Mammary epithelial cell (primary cell): ENCODE measurements at regions of chr1 and their contacts with region 1.

Region 1: GRCh38 chr1:223423641-223424233 is 30.5 kb downstream of the CCDC185 start:
- DNase-seq: peak; percentile 21
- H3K4me3 ChIP-seq: no peak overlapping the region
- H3K27ac ChIP-seq: no peak overlapping the region
- H3K4me1 ChIP-seq: peaks cover 21% of the 10 kb centered on the region
- H3K27me3 ChIP-seq: no peaks in the 10 kb centered on the region
- CTCF ChIP-seq: no peak

Region 2: DNA sequence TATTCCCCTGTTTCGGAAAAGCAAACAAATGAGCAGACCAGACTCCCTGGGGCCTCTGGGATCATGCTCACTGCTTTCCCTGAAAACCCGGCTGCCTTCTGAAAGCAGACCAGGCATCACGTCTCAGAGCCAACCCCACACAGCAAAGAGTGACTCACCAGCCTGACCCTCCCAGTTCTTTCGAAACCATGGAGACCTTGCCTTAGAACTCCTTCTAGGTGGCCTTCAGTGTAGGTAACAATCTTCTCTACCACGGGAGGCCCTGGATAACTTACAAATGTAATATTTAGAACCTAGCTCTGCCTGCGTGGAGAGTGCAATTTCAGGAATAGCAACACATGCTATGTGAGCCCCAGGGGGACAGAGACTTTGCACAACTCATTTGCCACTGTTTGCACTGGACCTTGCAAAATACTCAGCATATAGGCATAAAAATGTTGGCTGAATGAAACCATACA is 165.0 kb before region 1 on chr1:
- CTCF ChIA-PET with region 1: no interaction called
- dilution Hi-C with region 1: no loop called
- in situ Hi-C with region 1: no loop called
- intact Hi-C with region 1: no loop called
- DNase-seq: peak; percentile 77
- H3K4me3 ChIP-seq: no peak overlapping the region
- H3K27ac ChIP-seq: no peak overlapping the region
- H3K4me1 ChIP-seq: peaks cover 16% of the 10 kb centered on the region
- H3K27me3 ChIP-seq: no peaks in the 10 kb centered on the region
- CTCF ChIP-seq: no peak

Region 3: DNA sequence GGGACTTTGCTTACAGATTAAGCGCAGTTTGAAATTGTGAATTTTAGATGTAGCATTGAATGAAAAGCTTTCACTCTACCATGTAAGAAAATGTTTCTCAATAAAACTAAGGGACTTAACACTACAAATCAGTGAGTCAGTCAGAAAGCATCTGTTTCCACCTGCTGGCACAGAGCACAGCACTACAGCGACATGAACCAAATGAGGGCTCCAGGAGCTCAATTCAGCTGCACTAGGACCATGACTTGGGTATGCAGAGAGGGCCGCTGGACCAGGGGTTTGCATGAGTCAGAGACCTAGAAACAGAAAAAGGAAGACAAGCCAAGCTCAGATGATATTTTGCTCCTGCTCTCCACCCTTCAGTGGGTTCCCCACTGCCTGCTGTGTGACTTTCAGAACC is 64.9 kb before region 1 on chr1:
- CTCF ChIA-PET with region 1: no interaction called
- dilution Hi-C with region 1: no loop called
- in situ Hi-C with region 1: no loop called
- intact Hi-C with region 1: loop called (anchors 5 kb)
- DNase-seq: peak; percentile 21
- H3K4me3 ChIP-seq: no peak overlapping the region
- H3K27ac ChIP-seq: no peak overlapping the region
- H3K4me1 ChIP-seq: peaks cover 21% of the 10 kb centered on the region
- H3K27me3 ChIP-seq: peaks cover 7% of the 10 kb centered on the region
- CTCF ChIP-seq: peak in 1 of 2 donors; percentile 58